Mammary epithelial cell (primary cell): ENCODE measurements at regions of chr6 and their contacts with region 1.

Region 1: GRCh38 chr6:53544470-53545308 is at the start of gene GCLC:
- DNase-seq: peak; percentile 94
- H3K4me3 ChIP-seq: peak within 1 kb of the TSS; percentile 73 to 87 (median 79)
- H3K27ac ChIP-seq: peak within 1 kb of the TSS; percentile 85
- H3K4me1 ChIP-seq: peaks cover 23% of the 10 kb centered on the region
- H3K27me3 ChIP-seq: no peaks in the 10 kb centered on the region
- CTCF ChIP-seq: peak; percentile 26 to 55
- total RNA-seq, gene GCLC: 94.7 to 128 TPM

Region 2: GRCh38 chr6:53309059-53309900 is 235.4 kb before region 1 on chr6:
- CTCF ChIA-PET with region 1: no interaction called
- dilution Hi-C with region 1: no loop called
- in situ Hi-C with region 1: no loop called
- intact Hi-C with region 1: no loop called
- DNase-seq: no peak
- H3K4me3 ChIP-seq: no peak overlapping the region
- H3K27ac ChIP-seq: no peak overlapping the region
- H3K4me1 ChIP-seq: peaks cover 36% of the 10 kb centered on the region
- H3K27me3 ChIP-seq: no peaks in the 10 kb centered on the region
- CTCF ChIP-seq: no peak

Region 3: GRCh38 chr6:53458105-53458866 is 86.4 kb before region 1 on chr6:
- CTCF ChIA-PET with region 1: interaction called, 17 read pairs
- dilution Hi-C with region 1: no loop called
- in situ Hi-C with region 1: no loop called
- intact Hi-C with region 1: no loop called
- DNase-seq: no peak
- H3K4me3 ChIP-seq: no peak overlapping the region
- H3K27ac ChIP-seq: no peak overlapping the region
- H3K4me1 ChIP-seq: no peaks in the 10 kb centered on the region
- H3K27me3 ChIP-seq: no peaks in the 10 kb centered on the region
- CTCF ChIP-seq: no peak

Region 4: DNA sequence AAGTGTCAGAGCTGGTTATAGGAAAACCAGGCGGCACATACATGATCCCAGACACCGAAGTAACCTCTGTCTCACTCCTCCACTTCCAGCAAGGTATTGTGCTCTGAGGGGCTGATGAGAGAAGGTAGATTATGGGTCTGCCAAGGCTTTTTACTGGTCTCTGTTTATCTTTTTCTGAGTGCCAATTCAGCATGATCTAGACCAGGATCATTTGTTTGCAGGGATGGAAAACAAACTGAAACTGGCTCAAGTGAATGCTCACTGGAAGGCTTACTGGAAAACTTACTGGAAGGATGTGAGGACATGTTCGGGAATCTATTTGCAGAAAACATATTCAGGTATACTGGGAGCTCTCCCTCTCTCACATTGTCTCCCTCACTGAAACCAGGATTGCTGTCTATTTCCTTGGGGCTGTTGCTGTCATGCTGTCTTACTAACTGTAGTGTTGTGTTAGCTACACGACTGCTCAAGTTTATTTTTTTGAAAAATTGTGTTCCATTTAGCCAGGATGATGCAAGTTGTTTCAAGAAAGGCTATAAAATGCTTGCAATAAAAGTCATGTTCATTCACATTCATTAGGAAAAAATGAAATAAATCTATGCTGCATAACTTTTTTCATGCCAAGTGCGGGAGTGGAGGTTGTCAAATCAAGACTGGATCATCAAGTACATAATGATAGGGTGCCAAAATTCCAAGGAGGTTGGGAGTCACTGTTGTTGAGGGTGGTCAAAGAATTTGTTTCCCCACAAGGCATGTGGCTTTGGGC is 83.8 kb after region 1 on chr6:
- CTCF ChIA-PET with region 1: no interaction called
- dilution Hi-C with region 1: no loop called
- in situ Hi-C with region 1: no loop called
- intact Hi-C with region 1: loop called (anchors 1 kb)
- DNase-seq: peak; percentile 94
- H3K4me3 ChIP-seq: peak overlapping the region; percentile 4 to 37 (median 14)
- H3K27ac ChIP-seq: peak overlapping the region; percentile 99
- H3K4me1 ChIP-seq: peaks cover 42% of the 10 kb centered on the region
- H3K27me3 ChIP-seq: no peaks in the 10 kb centered on the region
- CTCF ChIP-seq: no peak

Region 5: GRCh38 chr6:53725791-53726431 is 181.2 kb after region 1 on chr6:
- CTCF ChIA-PET with region 1: no interaction called
- dilution Hi-C with region 1: no loop called
- in situ Hi-C with region 1: no loop called
- intact Hi-C with region 1: loop called (anchors 2 kb)
- DNase-seq: peak; percentile 48
- H3K4me3 ChIP-seq: no peak overlapping the region
- H3K27ac ChIP-seq: no peak overlapping the region
- H3K4me1 ChIP-seq: peaks cover 3% of the 10 kb centered on the region
- H3K27me3 ChIP-seq: no peaks in the 10 kb centered on the region
- CTCF ChIP-seq: peak; percentile 98 to 99